ENCODE measurements at regions of chr9 and their contacts with region 1.

Region 1: DNA sequence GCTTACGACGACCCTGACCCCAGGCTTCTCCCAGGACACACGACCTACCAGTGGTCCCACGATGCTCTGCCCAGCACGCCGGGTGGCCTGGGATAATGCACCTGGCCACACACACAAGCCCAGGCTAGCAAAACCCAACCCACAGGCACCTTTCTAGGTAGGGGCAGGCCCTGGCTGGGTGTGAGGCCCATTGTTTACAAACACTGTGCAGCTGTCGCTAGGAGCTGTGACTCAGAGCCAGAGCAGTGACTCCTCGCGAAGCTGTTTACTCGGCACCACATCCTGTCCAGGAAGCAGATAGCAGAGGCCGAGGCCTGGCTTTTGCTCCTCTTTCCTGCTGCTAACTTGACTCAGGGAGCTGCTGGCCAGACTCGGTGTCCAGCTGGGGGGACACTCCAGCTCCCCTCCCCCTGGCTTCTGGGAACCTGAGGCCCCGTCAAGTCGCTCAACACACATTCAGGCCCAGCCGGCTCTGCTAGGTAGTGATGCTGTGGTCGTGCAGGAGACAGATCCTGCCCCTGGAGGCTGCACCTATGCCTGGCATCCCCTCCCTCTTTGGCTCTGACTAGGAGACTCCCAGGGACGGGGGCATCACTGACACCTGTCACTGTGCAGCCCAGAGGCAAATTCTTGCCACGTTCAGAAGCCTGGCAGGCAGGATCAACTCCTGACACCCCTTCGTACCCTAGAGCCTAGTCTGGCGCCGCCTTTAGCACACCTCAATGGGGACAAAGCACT is 12.8 kb upstream of the RALGDS start:
- DNase-seq: peak; percentile 90
- H3K4me3 Mint-ChIP-seq: peak overlapping the region; percentile 31
- H3K27ac Mint-ChIP-seq: peak overlapping the region; percentile 99
- H3K4me1 Mint-ChIP-seq: peaks cover 58% of the 10 kb centered on the region
- H3K27me3 Mint-ChIP-seq: no peaks in the 10 kb centered on the region

Region 2: DNA sequence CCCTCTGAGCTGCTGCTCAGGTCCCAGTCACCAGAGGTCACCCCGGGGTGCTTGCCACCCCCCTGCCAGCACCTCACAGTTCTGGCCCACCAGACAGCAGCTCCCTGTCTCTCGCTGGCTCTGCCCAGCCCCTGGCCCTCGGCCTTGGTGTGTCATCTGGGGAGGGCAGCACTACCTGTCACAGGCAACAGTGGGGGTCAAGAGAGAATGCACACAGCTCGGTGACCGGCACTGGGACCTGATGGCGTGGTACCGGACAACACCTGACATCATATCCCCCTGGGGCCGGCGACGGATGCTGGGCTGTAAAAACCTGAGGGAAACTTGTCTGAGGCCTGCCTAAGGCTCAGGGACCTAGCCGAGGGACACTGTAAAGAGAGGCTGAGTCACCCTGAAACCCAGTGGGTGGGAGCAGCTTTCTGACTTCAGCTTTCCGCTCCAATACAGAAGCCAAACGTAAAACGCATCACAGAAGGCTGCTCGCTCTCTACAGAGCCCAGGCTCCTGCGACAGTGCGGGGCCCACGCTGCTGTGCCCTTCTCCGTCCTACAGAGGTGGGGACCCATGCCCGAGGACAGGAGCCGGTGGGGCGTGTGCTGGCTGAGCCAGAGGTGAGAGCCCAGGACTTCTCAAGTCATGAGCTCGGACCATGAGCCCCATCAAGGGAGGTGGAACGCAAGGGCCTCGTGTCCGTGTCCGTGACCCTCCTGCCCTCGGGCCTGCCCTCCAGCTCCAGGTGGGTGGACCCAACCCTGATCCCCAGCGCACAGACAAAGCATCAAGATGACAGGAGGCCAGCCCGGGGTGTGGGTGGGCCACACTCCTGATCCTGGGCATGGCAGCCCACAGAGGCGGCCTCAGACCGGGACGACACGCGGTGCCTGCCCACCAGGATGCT is 18.2 kb before region 1 on chr9:
- intact Hi-C with region 1: loop called (anchors 1 kb)
- DNase-seq: peak; percentile 65
- H3K4me3 Mint-ChIP-seq: peak overlapping the region; percentile 54
- H3K27ac Mint-ChIP-seq: peak overlapping the region; percentile 93
- H3K4me1 Mint-ChIP-seq: peaks cover 31% of the 10 kb centered on the region
- H3K27me3 Mint-ChIP-seq: no peaks in the 10 kb centered on the region

Region 3: DNA sequence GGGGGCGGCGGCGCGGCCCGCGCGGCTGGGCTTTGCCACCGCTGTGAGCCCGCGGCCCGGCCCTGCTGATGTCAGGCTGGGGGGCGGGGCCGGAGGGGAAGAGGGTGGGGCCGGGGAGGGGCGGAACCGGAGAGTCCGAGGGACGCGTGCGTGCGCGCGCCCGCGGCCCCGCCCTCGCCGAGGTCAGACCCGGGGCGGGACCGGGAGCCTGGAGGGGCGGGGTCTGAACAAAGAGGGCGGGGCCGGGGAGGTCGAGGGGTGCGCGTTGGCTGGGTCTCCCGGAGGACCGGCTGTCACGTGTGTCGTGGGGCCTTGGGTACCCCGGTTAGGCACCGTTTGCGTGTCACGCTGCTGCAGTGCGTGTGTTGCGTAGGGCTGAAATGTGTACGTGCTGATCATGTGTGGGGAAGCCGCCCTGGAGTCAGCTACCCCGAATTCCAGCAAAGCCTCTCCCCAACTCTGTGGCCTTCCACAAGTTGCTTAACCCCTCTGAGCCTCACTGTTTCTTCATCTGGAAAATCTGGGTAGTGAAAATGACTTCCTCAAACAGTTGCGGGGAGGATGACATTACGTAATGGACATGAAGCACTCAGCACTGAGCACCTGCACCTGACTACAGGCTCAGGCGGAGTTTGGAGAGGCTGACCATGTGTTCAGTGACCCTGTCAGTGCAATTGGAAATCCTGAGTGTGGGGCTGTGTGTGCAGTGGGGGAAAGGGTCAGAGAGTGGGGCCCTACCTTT is 12.5 kb before region 1 on chr9 and contains the start of gene RALGDS:
- intact Hi-C with region 1: loop called (anchors 1 kb)
- DNase-seq: peak; percentile 80
- H3K4me3 Mint-ChIP-seq: peak within 1 kb of the TSS; percentile 80
- H3K27ac Mint-ChIP-seq: peak within 1 kb of the TSS; percentile 66
- H3K4me1 Mint-ChIP-seq: peaks cover 34% of the 10 kb centered on the region
- H3K27me3 Mint-ChIP-seq: no peaks in the 10 kb centered on the region
- total RNA-seq, gene RALGDS: 78.8 and 85.8 TPM in 2 replicates

Region 4: GRCh38 chr9:133144137-133144903 is 10.5 kb after region 1 on chr9:
- intact Hi-C with region 1: loop called (anchors 1 kb)
- DNase-seq: peak; percentile 94
- H3K4me3 Mint-ChIP-seq: peak overlapping the region; percentile 69
- H3K27ac Mint-ChIP-seq: peak overlapping the region; percentile 89
- H3K4me1 Mint-ChIP-seq: peaks cover 46% of the 10 kb centered on the region
- H3K27me3 Mint-ChIP-seq: no peaks in the 10 kb centered on the region